ENCODE measurements at regions of chr6 and their contacts with region 1.

Region 1: DNA sequence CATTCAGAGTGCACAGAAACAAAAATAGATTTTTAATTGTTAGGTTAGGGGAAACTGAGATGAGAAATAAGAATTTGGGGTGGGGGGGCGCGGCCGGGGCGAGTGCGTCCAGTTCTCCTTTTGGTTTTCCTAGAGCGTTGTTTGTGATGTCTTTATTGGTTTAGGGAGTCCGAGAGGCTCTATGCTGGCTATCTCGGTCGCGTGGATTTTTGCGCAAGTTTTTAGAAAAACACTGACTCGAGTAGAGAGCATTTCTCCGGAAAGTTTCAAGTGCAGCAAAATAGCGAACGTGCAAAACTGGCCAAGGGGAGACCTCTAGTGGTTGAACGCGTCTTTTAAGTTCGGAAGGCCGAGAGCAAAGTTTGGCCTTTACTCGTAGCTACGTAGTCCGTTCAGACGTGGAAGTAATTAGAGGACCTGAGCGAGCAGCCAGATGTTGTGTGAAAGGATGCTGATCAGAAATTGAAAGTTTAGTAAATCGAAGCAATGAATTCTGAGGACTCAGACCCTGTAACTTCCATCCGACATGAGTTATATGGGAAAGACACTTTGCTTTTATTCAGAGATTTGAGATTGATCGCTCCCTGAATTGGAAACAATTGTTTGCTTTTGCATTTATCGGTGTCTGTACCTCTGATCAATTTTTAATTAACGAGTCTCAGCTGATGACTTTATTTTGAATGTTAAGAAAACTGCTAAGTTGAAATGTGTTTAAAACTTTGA is 2.7 kb downstream of the L3MBTL3 start:
- DNase-seq: peak; percentile 43 to 83 (median 78)
- ATAC-seq: peak; percentile 81
- H3K4me3 ChIP-seq: peak overlapping the region; percentile 62
- H3K4me3 Mint-ChIP-seq: peak overlapping the region; percentile 78 to 100 (median 98)
- H3K27ac ChIP-seq: peak overlapping the region; percentile 71
- H3K27ac Mint-ChIP-seq: peak overlapping the region; percentile 91 to 98 (median 96)
- H3K4me1 ChIP-seq: peaks cover 5 to 14% of the 10 kb centered on the region in 2 donors
- H3K4me1 Mint-ChIP-seq: peaks cover 21 to 56% (median 48%) of the 10 kb centered on the region in 7 donors
- H3K27me3 ChIP-seq: no peaks in the 10 kb centered on the region
- H3K27me3 Mint-ChIP-seq: peaks cover 0 to 19% (median 0%) of the 10 kb centered on the region in 5 donors

Region 2: GRCh38 chr6:129498950-129499842 is 521.9 kb before region 1 on chr6:
- CTCF ChIA-PET with region 1: no interaction called
- POLR2A ChIA-PET with region 1: no interaction called
- intact Hi-C with region 1: loop called (anchors 1 kb)
- DNase-seq: peak in 7 of 9 donors; percentile 25 to 60 (median 52)
- ATAC-seq: peak; percentile 82
- H3K4me3 ChIP-seq: peak overlapping the region; percentile 37
- H3K4me3 Mint-ChIP-seq: peak overlapping the region; percentile 23 to 81 (median 64)
- H3K27ac ChIP-seq: no peak overlapping the region
- H3K27ac Mint-ChIP-seq: peak overlapping the region in 7 of 9 donors; percentile 0 to 62 (median 2)
- H3K4me1 ChIP-seq: peaks cover 0 to 5% of the 10 kb centered on the region in 2 donors
- H3K4me1 Mint-ChIP-seq: peaks cover 9 to 43% (median 18%) of the 10 kb centered on the region in 7 donors
- H3K27me3 ChIP-seq: no peaks in the 10 kb centered on the region
- H3K27me3 Mint-ChIP-seq: no peaks in the 10 kb centered on the region

Region 3: GRCh38 chr6:129672881-129673643 is 348.0 kb before region 1 on chr6:
- CTCF ChIA-PET with region 1: no interaction called
- POLR2A ChIA-PET with region 1: interaction called, 3 read pairs
- intact Hi-C with region 1: loop called (anchors 1 to 2 kb)
- DNase-seq: peak in 2 of 9 donors; percentile 7 to 26
- ATAC-seq: peak; percentile 35
- H3K4me3 ChIP-seq: no peak overlapping the region
- H3K4me3 Mint-ChIP-seq: peak overlapping the region in 9 of 10 donors; percentile 69 to 88 (median 85)
- H3K27ac ChIP-seq: peak overlapping the region; percentile 34
- H3K27ac Mint-ChIP-seq: peak overlapping the region in 8 of 9 donors; percentile 40 to 95 (median 85)
- H3K4me1 ChIP-seq: peaks cover 16 to 22% of the 10 kb centered on the region in 2 donors
- H3K4me1 Mint-ChIP-seq: peaks cover 18 to 57% (median 25%) of the 10 kb centered on the region in 7 donors
- H3K27me3 ChIP-seq: no peaks in the 10 kb centered on the region
- H3K27me3 Mint-ChIP-seq: no peaks in the 10 kb centered on the region

Region 4: GRCh38 chr6:129766959-129767728 is 253.9 kb before region 1 on chr6:
- CTCF ChIA-PET with region 1: interaction called, 3 read pairs
- POLR2A ChIA-PET with region 1: no interaction called
- intact Hi-C with region 1: loop called in 1 of 2 experiments (anchors 2 kb)
- DNase-seq: peak; percentile 11 to 72 (median 51)
- ATAC-seq: peak; percentile 88
- H3K4me3 ChIP-seq: peak overlapping the region; percentile 65
- H3K4me3 Mint-ChIP-seq: peak overlapping the region; percentile 73 to 96 (median 86)
- H3K27ac ChIP-seq: no peak overlapping the region
- H3K27ac Mint-ChIP-seq: peak overlapping the region in 6 of 9 donors; percentile 5 to 65 (median 22)
- H3K4me1 ChIP-seq: peaks cover 7 to 8% of the 10 kb centered on the region in 2 donors
- H3K4me1 Mint-ChIP-seq: peaks cover 11 to 39% (median 13%) of the 10 kb centered on the region in 7 donors
- H3K27me3 ChIP-seq: peaks cover 0 to 4% of the 10 kb centered on the region in 2 donors
- H3K27me3 Mint-ChIP-seq: peaks cover 3 to 81% (median 29%) of the 10 kb centered on the region in 5 donors

Region 5: GRCh38 chr6:129936329-129937165 is 84.5 kb before region 1 on chr6:
- CTCF ChIA-PET with region 1: interaction called, 5 read pairs
- POLR2A ChIA-PET with region 1: no interaction called
- intact Hi-C with region 1: loop called (anchors 1 to 2 kb)
- DNase-seq: peak in 5 of 9 donors; percentile 21 to 47 (median 28)
- ATAC-seq: peak; percentile 77
- H3K4me3 ChIP-seq: no peak overlapping the region
- H3K4me3 Mint-ChIP-seq: no peak overlapping the region
- H3K27ac ChIP-seq: no peak overlapping the region
- H3K27ac Mint-ChIP-seq: no peak overlapping the region
- H3K4me1 ChIP-seq: no peaks in the 10 kb centered on the region
- H3K4me1 Mint-ChIP-seq: peaks cover 0 to 3% (median 0%) of the 10 kb centered on the region in 7 donors
- H3K27me3 ChIP-seq: no peaks in the 10 kb centered on the region
- H3K27me3 Mint-ChIP-seq: peaks cover 19 to 32% (median 24%) of the 10 kb centered on the region in 5 donors

Region 6: GRCh38 chr6:130843575-130844320 is 822.7 kb after region 1 on chr6:
- CTCF ChIA-PET with region 1: no interaction called
- POLR2A ChIA-PET with region 1: no interaction called
- intact Hi-C with region 1: loop called in 1 of 2 experiments (anchors 5 kb)
- DNase-seq: peak in 7 of 9 donors; percentile 30 to 74 (median 52)
- ATAC-seq: peak; percentile 90
- H3K4me3 ChIP-seq: no peak overlapping the region
- H3K4me3 Mint-ChIP-seq: no peak overlapping the region
- H3K27ac ChIP-seq: no peak overlapping the region
- H3K27ac Mint-ChIP-seq: peak overlapping the region in 1 of 9 donors; percentile 51
- H3K4me1 ChIP-seq: no peaks in the 10 kb centered on the region
- H3K4me1 Mint-ChIP-seq: peaks cover 0 to 7% (median 0%) of the 10 kb centered on the region in 7 donors
- H3K27me3 ChIP-seq: no peaks in the 10 kb centered on the region
- H3K27me3 Mint-ChIP-seq: no peaks in the 10 kb centered on the region

Measured in naive thymus-derived CD4-positive, alpha-beta T cell (primary cell).